Panc1 (cell line): ENCODE measurements at regions of chr11 and their contacts with region 1.

Region 1: GRCh38 chr11:61315260-61315659 is 17.6 kb downstream of the DDB1 start:
- DNase-seq: no peak
- ATAC-seq: no peak
- H3K4me3 ChIP-seq: no peak overlapping the region
- H3K27ac ChIP-seq: no peak overlapping the region
- H3K4me1 ChIP-seq: no peaks in the 10 kb centered on the region
- H3K27me3 ChIP-seq: no peaks in the 10 kb centered on the region
- CTCF ChIP-seq: no peak

Region 2: DNA sequence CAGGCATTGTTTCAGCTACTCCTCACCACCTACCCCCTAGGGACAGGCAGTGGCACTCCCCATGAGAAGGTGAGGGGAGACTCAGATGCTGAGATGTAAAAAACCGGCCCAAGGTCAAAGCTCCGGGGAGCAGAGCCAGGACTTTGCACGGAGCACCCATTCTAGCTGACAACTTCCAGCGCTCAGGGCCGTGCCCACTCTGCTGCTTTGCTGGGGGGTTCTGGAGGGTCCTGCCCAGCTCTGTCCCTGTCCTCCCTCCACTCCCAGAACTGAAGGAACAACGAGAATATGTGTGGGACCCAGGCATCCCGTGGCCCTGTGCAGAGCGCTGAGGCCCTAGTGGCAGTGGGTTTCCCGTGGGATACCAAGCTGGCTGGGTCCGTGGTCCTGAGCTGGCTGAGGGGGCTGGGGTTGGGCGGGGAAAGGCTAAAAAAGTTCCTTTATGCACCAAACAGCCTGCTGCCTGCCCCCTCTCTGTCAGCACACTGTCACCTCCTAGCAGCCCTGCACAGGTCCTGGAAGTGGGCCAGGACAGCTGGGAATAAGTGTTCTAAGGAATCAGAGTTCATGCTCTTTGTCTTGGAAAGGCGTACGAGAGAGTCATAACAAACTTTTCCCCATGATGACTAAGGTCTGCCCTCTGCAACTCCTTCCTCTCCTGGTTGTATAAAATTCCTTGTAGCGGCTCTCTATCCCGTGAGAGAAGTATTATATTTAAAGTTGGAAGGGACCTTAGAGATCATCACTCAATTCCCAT is 528.3 kb before region 1 on chr11:
- CTCF ChIA-PET with region 1: no interaction called
- POLR2A ChIA-PET with region 1: no interaction called
- in situ Hi-C with region 1: no loop called
- intact Hi-C with region 1: no loop called
- DNase-seq: no peak
- ATAC-seq: peak; percentile 44
- H3K4me3 ChIP-seq: no peak overlapping the region
- H3K27ac ChIP-seq: no peak overlapping the region
- H3K4me1 ChIP-seq: no peaks in the 10 kb centered on the region
- H3K27me3 ChIP-seq: no peaks in the 10 kb centered on the region
- CTCF ChIP-seq: no peak

Region 3: GRCh38 chr11:61281581-61282250 is 33.5 kb before region 1 on chr11:
- CTCF ChIA-PET with region 1: no interaction called
- POLR2A ChIA-PET with region 1: no interaction called
- in situ Hi-C with region 1: no loop called
- intact Hi-C with region 1: no loop called
- DNase-seq: no peak
- ATAC-seq: peak; percentile 95
- H3K4me3 ChIP-seq: peak overlapping the region; percentile 42 to 64
- H3K27ac ChIP-seq: no peak overlapping the region
- H3K4me1 ChIP-seq: 0 out of 2 replicates have a peak, but pooled peaks cover 3% of the 10 kb centered on the region
- H3K27me3 ChIP-seq: no peaks in the 10 kb centered on the region
- CTCF ChIP-seq: no peak

Region 4: GRCh38 chr11:61294717-61295595 is 20.3 kb before region 1 on chr11 and contains the start of gene VWCE:
- CTCF ChIA-PET with region 1: no interaction called
- POLR2A ChIA-PET with region 1: interaction called, 11 read pairs
- in situ Hi-C with region 1: no loop called
- intact Hi-C with region 1: no loop called
- DNase-seq: no peak
- ATAC-seq: peak; percentile 82
- H3K4me3 ChIP-seq: peak within 1 kb of the TSS; percentile 48 to 62
- H3K27ac ChIP-seq: no peak within 1 kb of the TSS
- H3K4me1 ChIP-seq: no peaks in the 10 kb centered on the region
- H3K27me3 ChIP-seq: no peaks in the 10 kb centered on the region
- CTCF ChIP-seq: peak; percentile 71; the same call in 1 of the 2 replicates
- total RNA-seq, gene VWCE: 0.51 TPM

Region 5: DNA sequence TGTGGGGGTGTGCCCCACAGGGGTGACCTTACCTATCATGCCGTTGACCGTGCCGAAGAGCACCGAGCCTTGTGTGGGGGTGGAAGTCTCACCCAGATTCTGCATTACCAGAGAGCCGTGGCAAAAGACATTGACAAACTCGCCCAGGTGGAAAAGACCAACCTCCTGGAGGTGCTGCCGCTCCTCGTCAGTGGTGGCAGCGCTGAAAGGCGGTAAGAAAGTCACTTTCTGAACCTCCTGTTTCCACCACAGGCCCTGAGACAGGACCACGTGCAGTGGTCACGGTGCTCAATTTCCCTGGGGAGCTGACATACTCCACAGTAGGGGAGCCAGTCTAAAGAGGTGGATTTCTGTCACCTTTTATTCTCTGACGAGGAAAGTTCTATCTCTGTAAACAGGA is 12.7 kb before region 1 on chr11:
- CTCF ChIA-PET with region 1: no interaction called
- POLR2A ChIA-PET with region 1: interaction called, 17 read pairs
- in situ Hi-C with region 1: no loop called
- intact Hi-C with region 1: no loop called
- DNase-seq: no peak
- ATAC-seq: no peak
- H3K4me3 ChIP-seq: no peak overlapping the region
- H3K27ac ChIP-seq: no peak overlapping the region
- H3K4me1 ChIP-seq: no peaks in the 10 kb centered on the region
- H3K27me3 ChIP-seq: no peaks in the 10 kb centered on the region
- CTCF ChIP-seq: no peak

Region 6: DNA sequence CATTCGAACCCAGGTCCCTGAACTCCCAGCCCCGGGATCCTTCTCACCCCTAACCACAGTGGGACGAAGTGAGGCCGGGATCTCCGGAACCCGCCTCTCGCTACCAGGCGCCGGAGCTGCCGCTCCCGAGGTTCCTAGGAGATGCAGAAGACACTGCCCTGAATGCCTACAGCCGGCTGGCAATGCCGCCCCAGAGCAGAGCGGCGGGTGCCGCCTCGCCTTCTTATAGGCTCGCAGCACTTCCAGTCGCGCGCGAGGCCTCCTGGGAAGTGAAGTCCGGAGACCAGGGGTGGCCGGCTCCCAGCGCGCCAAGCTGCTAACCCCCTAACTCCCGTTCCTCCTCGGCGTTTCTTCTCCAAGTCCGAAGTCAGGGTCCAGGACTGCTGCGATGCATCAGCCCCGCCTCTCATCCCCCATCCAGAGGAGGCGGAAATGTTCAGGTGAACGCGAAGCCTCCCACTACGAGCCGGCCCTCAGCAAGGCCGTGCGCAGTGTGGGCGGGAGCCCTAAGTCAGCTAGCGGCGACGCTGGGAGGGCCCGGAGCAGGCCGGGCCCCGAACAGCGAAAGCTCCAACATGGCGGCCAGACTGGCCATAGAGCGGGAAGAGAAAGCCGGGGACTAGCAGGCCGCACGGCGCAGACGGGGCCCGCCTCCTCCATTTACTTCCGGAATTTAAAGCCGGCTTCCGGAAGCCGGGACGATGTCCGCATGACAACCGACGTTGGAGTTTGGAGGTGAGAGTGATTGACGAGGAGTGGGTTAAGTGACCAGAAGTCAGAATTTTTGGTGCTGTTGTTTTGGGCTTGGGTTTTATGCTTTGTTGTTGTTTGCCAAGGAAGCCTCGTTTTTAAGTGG is 46.7 kb after region 1 on chr11 and contains the starts of genes CYB561A3 and TMEM138:
- CTCF ChIA-PET with region 1: interaction called, 13 read pairs
- POLR2A ChIA-PET with region 1: no interaction called
- in situ Hi-C with region 1: no loop called
- intact Hi-C with region 1: no loop called
- DNase-seq: peak; percentile 77
- ATAC-seq: peak; percentile 97
- H3K4me3 ChIP-seq: peak within 1 kb of the TSS; percentile 94 to 95
- H3K27ac ChIP-seq: peak within 1 kb of the TSS; percentile 99
- H3K4me1 ChIP-seq: peaks cover 12% of the 10 kb centered on the region
- H3K27me3 ChIP-seq: no peaks in the 10 kb centered on the region
- CTCF ChIP-seq: no peak
- total RNA-seq, gene CYB561A3: 80.3 TPM
- total RNA-seq, gene TMEM138: 86.6 TPM

Region 7: GRCh38 chr11:62621567-62622470 is 1306.6 kb after region 1 on chr11 and contains the start of gene B3GAT3:
- CTCF ChIA-PET with region 1: no interaction called
- POLR2A ChIA-PET with region 1: interaction called, 14 read pairs
- in situ Hi-C with region 1: no loop called
- intact Hi-C with region 1: no loop called
- DNase-seq: peak; percentile 85
- ATAC-seq: peak; percentile 99
- H3K4me3 ChIP-seq: peak within 1 kb of the TSS; percentile 81 to 94
- H3K27ac ChIP-seq: peak within 1 kb of the TSS; percentile 98
- H3K4me1 ChIP-seq: peaks cover 14% of the 10 kb centered on the region
- H3K27me3 ChIP-seq: no peaks in the 10 kb centered on the region
- CTCF ChIP-seq: no peak
- total RNA-seq, gene B3GAT3: 68.2 TPM